ENCODE measurements at regions of chr1 and their contacts with region 1.

Region 1: DNA sequence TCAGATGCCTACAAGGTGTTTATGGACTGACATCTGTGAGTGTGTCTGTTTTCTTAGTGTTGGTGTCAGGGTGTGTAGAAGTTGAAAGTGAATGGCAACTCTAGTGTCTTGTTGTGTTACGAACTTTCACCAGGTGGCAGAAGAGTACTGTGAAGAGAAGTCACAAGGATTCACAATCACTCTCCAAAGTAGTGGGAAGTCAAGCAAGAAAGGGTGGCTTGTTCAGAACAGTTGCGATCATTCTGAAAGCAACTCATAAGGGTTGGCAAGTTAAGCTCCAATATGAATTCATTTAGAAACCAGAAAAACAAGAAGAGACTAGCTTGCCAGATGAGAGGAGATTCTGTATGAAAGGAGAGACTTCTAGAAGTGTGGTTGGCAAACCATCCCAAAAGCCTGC is 86.1 kb downstream of the FASLG start:
- DNase-seq: no peak
- ATAC-seq: peak; percentile 86
- H3K4me3 Mint-ChIP-seq: no peak overlapping the region
- H3K27ac Mint-ChIP-seq: peak overlapping the region; percentile 43
- H3K4me1 Mint-ChIP-seq: peaks cover 34% of the 10 kb centered on the region
- H3K27me3 Mint-ChIP-seq: peaks cover 4% of the 10 kb centered on the region
- CTCF ChIP-seq: peak; percentile 42

Region 2: DNA sequence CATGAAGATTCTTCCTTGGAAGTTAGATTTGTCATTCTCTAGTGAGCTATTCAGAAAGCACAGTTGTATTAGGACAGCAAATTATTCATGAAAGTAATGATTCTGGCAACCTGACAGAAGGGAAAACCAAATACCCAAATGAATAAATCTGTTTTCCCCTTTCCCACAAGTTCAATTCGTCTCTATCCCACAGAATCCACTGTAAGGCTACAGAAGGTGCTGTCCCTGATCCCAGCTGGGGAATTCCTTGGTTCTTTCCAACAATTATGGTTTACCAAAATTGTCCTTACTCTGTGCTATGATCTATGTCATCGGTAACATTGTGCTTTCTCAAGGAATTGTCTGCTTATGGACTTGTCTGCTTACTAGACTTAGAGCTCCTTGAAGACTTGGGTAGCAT is 18.0 kb after region 1 on chr1:
- CTCF ChIA-PET with region 1: interaction called, 7 read pairs
- POLR2A ChIA-PET with region 1: interaction called, 14 read pairs
- intact Hi-C with region 1: no loop called
- DNase-seq: no peak
- ATAC-seq: no peak
- H3K4me3 Mint-ChIP-seq: no peak overlapping the region
- H3K27ac Mint-ChIP-seq: no peak overlapping the region
- H3K4me1 Mint-ChIP-seq: peaks cover 36% of the 10 kb centered on the region
- H3K27me3 Mint-ChIP-seq: no peaks in the 10 kb centered on the region
- CTCF ChIP-seq: no peak

Region 3: GRCh38 chr1:173020138-173020750 is 275.2 kb after region 1 on chr1:
- CTCF ChIA-PET with region 1: interaction called, 5 read pairs
- POLR2A ChIA-PET with region 1: no interaction called
- intact Hi-C with region 1: loop called (anchors 2 kb)
- DNase-seq: no peak
- ATAC-seq: peak; percentile 84
- H3K4me3 Mint-ChIP-seq: peak overlapping the region; percentile 56
- H3K27ac Mint-ChIP-seq: peak overlapping the region; percentile 90
- H3K4me1 Mint-ChIP-seq: peaks cover 61% of the 10 kb centered on the region
- H3K27me3 Mint-ChIP-seq: no peaks in the 10 kb centered on the region
- CTCF ChIP-seq: no peak

Region 4: DNA sequence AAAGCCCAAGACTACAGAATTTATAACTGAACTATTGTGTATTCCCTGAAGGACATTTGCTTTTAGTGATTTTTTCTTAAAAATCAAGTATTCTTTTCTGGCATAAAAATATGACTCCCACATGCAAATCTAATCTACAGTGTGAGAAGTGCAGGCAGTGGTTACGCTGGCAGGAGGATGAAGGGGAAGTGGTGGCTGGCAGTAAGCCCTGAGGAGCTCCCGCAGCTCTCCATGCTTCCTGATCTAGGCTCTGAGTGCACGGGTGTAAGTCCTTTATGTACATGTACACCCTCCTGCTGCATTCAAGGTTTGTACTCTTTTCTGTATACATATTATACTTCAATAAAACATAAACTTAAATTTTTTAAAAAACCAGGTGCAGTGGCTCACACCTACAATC is 664.6 kb after region 1 on chr1:
- CTCF ChIA-PET with region 1: interaction called, 6 read pairs
- POLR2A ChIA-PET with region 1: interaction called, 6 read pairs
- intact Hi-C with region 1: loop called (anchors 2 kb)
- DNase-seq: no peak
- ATAC-seq: peak; percentile 25
- H3K4me3 Mint-ChIP-seq: peak overlapping the region; percentile 81
- H3K27ac Mint-ChIP-seq: peak overlapping the region; percentile 95
- H3K4me1 Mint-ChIP-seq: peaks cover 91% of the 10 kb centered on the region
- H3K27me3 Mint-ChIP-seq: no peaks in the 10 kb centered on the region
- CTCF ChIP-seq: no peak

Region 5: DNA sequence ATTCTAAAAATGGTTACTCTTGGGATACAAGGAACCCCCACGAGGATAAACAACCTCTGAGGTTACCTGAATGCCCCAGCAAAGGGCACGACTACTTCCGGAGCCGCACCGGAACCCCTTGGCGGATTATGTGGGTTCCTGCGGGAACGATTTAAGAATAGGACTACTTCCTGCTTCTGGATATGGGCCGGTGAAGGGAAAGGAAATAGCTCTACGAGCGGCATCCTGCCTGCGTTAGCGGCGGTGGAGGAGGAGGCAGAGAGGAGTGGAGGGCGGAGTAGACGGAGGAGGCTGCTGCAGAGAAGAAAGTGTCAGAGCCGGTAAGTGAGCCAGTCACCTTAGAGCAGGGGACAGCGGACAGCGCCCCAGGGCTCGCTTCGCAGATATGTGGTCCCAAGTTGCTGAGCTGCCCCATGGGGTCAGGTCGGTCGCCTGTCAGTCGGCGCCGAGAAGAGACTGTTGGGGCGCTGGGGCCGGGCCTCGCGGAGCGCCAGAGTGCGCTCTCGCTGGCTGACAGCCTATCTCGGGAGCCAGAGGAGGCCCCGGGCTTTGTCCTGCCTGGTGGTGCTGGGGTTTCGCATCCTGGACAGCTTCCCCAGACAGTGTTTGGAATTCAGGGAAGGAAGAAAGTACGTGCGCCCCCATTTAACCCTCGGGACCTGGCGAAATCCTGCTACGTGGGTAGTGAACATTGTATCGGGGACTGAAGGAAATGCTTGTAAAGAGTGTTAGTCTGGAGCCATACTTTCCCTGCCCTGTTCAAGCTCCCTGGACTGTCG is 969.9 kb after region 1 on chr1 and contains the start of gene KLHL20:
- CTCF ChIA-PET with region 1: no interaction called
- POLR2A ChIA-PET with region 1: no interaction called
- intact Hi-C with region 1: loop called (anchors 2 kb)
- DNase-seq: peak; percentile 71
- ATAC-seq: peak; percentile 96
- H3K4me3 Mint-ChIP-seq: peak within 1 kb of the TSS; percentile 93
- H3K27ac Mint-ChIP-seq: peak within 1 kb of the TSS; percentile 89
- H3K4me1 Mint-ChIP-seq: peaks cover 22% of the 10 kb centered on the region
- H3K27me3 Mint-ChIP-seq: peaks cover 14% of the 10 kb centered on the region
- CTCF ChIP-seq: no peak
- total RNA-seq, gene KLHL20: 19.6 and 26.1 TPM in 2 replicates

Region 6: GRCh38 chr1:174074757-174075156 is 1329.7 kb after region 1 on chr1:
- CTCF ChIA-PET with region 1: no interaction called
- POLR2A ChIA-PET with region 1: no interaction called
- intact Hi-C with region 1: loop called (anchors 2 kb)
- DNase-seq: no peak
- ATAC-seq: no peak
- H3K4me3 Mint-ChIP-seq: no peak overlapping the region
- H3K27ac Mint-ChIP-seq: no peak overlapping the region
- H3K4me1 Mint-ChIP-seq: no peaks in the 10 kb centered on the region
- H3K27me3 Mint-ChIP-seq: peaks cover 3% of the 10 kb centered on the region
- CTCF ChIP-seq: no peak

Region 7: GRCh38 chr1:174743654-174744561 is 1998.9 kb after region 1 on chr1:
- CTCF ChIA-PET with region 1: no interaction called
- POLR2A ChIA-PET with region 1: no interaction called
- intact Hi-C with region 1: loop called (anchors 1 kb)
- DNase-seq: no peak
- ATAC-seq: peak; percentile 31
- H3K4me3 Mint-ChIP-seq: no peak overlapping the region
- H3K27ac Mint-ChIP-seq: no peak overlapping the region
- H3K4me1 Mint-ChIP-seq: peaks cover 38% of the 10 kb centered on the region
- H3K27me3 Mint-ChIP-seq: no peaks in the 10 kb centered on the region
- CTCF ChIP-seq: no peak

Measured in activated B cell treated with CpG ODN at 0.5 μM for 24 hours (primary cell).